Motor neuron (in vitro differentiated cells): ENCODE measurements at regions of chr5 and their contacts with region 1.

Region 1: DNA sequence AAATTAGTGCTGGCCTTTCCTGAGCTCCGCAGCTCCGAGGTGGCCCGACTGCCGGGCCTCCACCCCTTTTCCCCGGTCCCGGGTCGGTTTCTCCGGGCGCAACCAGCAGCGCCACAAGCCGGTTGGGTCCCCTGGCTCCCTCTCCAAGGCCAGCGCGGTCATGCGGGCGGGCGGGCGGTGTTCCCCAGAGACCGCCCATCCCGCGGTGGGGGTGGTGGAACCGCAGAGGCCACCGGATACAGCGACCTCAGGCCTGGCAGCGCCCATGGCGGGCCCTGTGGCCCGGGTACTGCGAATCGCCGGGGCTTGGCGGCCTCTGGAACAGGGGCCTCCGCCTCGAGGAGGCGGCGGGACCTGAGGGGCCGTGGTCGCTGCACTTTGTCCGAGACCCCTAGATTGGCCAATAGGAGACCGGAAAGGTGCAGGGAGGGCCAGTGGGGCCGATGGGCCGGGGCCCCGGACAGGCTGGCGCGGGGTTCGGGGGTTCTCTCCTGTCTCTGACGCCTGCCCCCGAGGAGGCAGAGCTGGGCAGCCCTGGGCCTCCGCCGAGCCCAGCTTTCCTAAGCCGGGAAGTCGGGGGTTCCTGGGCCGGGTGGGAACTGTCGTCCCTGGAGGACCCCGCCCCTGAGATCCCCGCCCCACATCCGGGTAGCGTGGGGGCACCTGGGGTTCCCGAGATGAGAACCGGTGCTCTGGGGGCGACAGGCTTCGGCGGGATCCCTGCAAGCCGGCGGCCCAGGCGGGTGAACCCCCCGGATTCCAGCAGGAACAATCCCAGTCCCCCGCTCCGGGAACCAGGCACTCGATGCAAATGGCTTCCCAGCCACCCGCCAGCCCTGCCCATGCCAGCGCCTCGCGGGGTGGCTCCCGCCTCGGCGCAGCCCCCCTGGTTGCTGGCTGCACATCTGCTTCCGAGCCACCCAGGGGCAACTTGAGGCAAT is 293.9 kb downstream of the ZSWIM6 start:
- ATAC-seq: peak; percentile 75 to 94 (median 88)
- H3K4me3 ChIP-seq: peak overlapping the region; percentile 11 to 32 (median 15)
- H3K27ac ChIP-seq: peak overlapping the region; percentile 27 to 45
- H3K4me1 ChIP-seq: peaks cover 16 to 19% of the 10 kb centered on the region in 2 donors

Region 2: DNA sequence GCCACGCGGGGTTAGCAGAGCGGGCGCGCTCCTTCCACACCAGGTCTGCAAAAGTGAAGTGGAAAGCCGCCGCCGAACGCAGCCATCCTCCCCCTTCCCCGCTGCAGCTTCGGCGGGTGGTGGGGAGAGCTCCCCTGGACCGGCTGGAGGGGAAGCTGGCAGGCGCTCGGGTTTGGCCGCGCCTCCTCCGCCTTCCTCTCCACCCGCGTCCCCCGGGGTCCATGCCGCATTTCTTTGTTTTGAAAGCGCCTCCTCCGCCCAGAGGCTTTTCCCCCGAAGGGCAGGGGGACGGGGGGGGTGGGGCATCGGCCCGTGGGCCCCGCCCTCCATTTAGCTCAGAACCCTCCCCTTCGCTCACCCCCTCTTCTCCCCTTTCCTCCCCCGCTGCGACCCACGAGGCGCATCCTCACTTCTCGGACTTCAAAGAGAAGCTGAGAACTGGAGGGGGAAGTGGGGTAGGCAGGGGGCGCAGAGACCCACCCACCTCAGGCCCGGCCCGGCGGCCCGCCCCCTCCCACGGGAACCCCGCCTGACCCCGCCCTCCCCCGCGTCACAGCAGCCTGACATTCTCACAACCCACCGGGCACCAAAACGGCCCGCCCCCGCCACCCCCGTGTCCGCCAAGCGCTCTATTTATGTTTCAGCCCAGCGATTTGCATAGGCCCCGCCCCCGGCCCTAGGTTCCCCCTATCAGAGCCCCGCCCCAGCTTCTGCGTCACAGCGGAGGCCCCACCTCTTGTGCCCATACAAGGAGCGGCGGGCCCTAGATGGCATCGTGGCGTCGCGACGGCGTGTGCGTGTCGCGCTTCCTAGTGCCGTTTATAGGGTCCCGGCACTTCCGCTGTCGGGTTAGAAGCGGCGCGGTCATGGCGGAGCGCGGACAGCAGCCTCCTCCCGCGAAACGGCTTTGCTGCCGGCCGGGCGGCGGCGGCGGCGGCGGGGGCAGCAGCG is 294.3 kb before region 1 on chr5 and contains the start of gene ZSWIM6:
- in situ Hi-C with region 1: loop called in 1 of 9 experiments (anchors 25 kb)
- ATAC-seq: peak; percentile 54 to 83 (median 78)
- H3K4me3 ChIP-seq: peak within 1 kb of the TSS; percentile 85 to 100 (median 99)
- H3K27ac ChIP-seq: peak within 1 kb of the TSS; percentile 89 to 93
- H3K4me1 ChIP-seq: peaks cover 10 to 17% of the 10 kb centered on the region in 2 donors
- total RNA-seq, gene ZSWIM6: 8.2 to 54.3 (median 20.2) TPM

Region 3: DNA sequence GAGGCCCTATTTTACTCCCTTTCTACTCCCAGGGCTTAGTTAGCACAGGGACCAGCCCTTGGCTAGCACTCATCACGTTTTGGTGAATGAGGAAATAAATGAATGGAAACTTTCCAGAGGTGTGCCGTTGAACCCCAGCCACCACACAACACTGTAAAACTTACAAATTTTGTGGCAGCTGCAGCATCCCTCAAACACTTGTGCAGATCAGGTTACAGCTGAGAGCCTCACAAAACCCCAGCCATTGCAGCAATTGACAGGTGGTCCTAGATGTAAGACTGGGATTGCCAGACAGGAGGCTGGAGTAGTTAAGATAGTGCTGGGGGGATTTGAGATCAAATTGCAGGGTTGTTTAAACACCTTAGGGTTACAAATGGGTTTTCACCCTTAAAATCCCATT is 197.8 kb after region 1 on chr5:
- in situ Hi-C with region 1: no loop called
- ATAC-seq: no peak
- H3K4me3 ChIP-seq: no peak overlapping the region
- H3K27ac ChIP-seq: no peak overlapping the region
- H3K4me1 ChIP-seq: peaks cover 5 to 9% of the 10 kb centered on the region in 2 donors